ENCODE measurements at regions of chr6 and their contacts with region 1.

Region 1: GRCh38 chr6:43838276-43839036 is 68.4 kb downstream of the VEGFA start:
- DNase-seq: peak in 2 of 14 experiments; percentile 37 to 47
- ATAC-seq: no peak
- H3K4me3 ChIP-seq: no peak overlapping the region
- H3K4me3 Mint-ChIP-seq: no peak overlapping the region
- H3K27ac ChIP-seq: no peak overlapping the region
- H3K27ac Mint-ChIP-seq: no peak overlapping the region
- H3K4me1 ChIP-seq: no peaks in the 10 kb centered on the region
- H3K4me1 Mint-ChIP-seq: no peaks in the 10 kb centered on the region
- H3K27me3 ChIP-seq: no peaks in the 10 kb centered on the region
- H3K27me3 Mint-ChIP-seq: peaks cover 4% of the 10 kb centered on the region
- CTCF ChIP-seq: no peak

Region 2: DNA sequence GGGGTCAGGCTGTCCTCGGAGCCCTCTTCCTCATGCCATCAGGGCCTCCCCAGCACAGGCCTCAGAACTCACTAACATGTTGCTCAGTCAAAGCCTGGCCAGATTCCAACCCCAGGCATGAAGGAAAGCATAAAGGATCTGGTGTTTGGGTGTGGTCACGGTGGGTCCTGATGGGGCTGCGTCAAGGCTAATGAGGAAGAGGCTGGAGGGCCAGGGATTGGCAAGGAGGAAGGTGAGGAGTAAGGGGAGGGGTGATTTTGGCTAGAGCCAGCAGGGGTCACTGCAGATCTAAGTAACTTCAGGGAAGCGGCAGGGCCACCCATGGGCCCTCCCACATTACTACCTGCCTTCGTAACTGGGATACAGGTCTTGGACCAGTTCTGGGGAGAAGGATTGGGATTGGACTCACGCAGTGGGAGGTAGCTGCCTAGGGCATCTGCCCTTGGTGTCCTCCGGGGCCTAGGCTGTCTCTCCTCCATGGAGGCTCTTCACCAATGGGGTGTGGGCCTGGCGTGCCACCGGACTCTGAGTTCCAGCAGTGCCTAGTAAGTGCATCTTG is 114.6 kb before region 1 on chr6:
- CTCF ChIA-PET with region 1: no interaction called
- POLR2A ChIA-PET with region 1: no interaction called
- intact Hi-C with region 1: loop called in 1 of 2 experiments (anchors 5 kb)
- DNase-seq: peak; percentile 43 to 85 (median 58)
- ATAC-seq: peak; percentile 68
- H3K4me3 ChIP-seq: no peak overlapping the region
- H3K4me3 Mint-ChIP-seq: no peak overlapping the region
- H3K27ac ChIP-seq: no peak overlapping the region
- H3K27ac Mint-ChIP-seq: peak overlapping the region; percentile 85
- H3K4me1 ChIP-seq: peaks cover 28% of the 10 kb centered on the region
- H3K4me1 Mint-ChIP-seq: peaks cover 30% of the 10 kb centered on the region
- H3K27me3 ChIP-seq: no peaks in the 10 kb centered on the region
- H3K27me3 Mint-ChIP-seq: no peaks in the 10 kb centered on the region
- CTCF ChIP-seq: peak; percentile 72